Aorta (tissue), 5 donors: ENCODE measurements at regions of chr12 and their contacts with region 1.

Region 1: DNA sequence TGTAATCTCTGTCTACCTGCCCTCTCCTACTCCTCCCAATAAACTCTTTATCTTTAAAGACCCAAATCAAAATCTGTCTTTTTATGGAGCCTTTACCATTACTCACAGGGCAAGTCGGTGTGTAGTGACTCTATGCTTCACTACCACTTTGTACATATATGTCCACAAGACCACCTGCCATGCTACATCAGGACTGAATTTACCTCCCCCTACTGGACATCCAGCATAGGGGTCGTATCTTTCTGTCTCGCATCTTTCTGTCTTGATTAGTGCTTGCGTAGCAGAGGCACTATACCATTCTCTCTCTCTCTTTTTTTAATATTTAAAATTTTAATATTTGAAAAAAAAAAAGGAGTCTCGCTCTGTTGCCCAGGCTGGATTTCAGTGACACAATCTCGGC is 587.5 kb downstream of the SOX5 start:
- DNase-seq: no peak
- ATAC-seq: no peak
- H3K4me3 ChIP-seq: no peak overlapping the region
- H3K27ac ChIP-seq: peak overlapping the region; percentile 36 to 52
- H3K4me1 ChIP-seq: peaks cover 0 to 3% of the 10 kb centered on the region in 2 donors
- H3K27me3 ChIP-seq: no peaks in the 10 kb centered on the region

Region 2: DNA sequence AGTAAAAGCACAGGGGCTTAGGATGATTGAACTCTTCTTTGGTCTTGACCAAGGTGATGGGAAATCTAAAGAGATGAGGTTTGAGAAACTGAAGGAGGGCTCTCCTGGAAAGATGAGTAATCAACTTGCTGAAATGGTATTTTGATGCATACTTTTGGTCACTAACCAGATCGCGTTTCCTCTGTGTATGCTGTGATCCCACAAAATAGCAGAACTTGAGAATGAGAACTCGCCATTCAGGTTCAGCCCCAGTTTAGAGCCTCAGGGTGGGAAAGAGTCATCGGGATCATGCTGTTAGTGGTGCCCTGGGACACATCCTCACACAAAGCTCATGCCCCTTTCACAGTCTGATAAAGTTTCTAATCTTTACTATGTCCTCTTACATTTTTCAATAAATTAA is 248.2 kb before region 1 on chr12:
- intact Hi-C with region 1: no loop called
- DNase-seq: no peak
- ATAC-seq: no peak
- H3K4me3 ChIP-seq: no peak overlapping the region
- H3K27ac ChIP-seq: no peak overlapping the region
- H3K4me1 ChIP-seq: no peaks in the 10 kb centered on the region
- H3K27me3 ChIP-seq: no peaks in the 10 kb centered on the region

Region 3: DNA sequence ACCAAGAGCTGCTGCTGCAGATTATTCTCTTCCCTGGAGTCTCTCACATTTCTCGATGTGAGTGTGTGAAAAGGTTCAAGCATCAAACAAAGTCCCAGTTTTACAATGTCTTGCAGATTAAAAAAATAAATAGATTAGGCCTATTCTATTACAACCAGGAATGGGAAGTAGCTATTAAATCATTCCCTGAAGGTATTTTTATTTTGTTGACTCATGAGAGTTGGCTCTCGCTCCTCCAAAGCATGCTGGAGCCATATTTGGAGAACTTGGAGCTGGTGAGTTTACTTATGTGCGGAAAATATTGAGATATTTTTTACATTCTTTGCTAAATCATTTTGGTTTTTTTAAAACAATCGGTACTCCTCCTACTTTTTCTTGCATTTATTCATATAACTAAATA is 164.7 kb before region 1 on chr12:
- intact Hi-C with region 1: loop called (anchors 5 kb)
- DNase-seq: no peak
- ATAC-seq: peak; percentile 84
- H3K4me3 ChIP-seq: peak overlapping the region in 1 of 2 donors; percentile 10
- H3K27ac ChIP-seq: peak overlapping the region in 1 of 2 donors; percentile 67
- H3K4me1 ChIP-seq: peaks cover 2 to 3% of the 10 kb centered on the region in 2 donors
- H3K27me3 ChIP-seq: no peaks in the 10 kb centered on the region

Region 4: GRCh38 chr12:23540572-23540971 is 178.6 kb after region 1 on chr12:
- intact Hi-C with region 1: loop called in 1 of 2 experiments (anchors 10 kb)
- DNase-seq: no peak
- ATAC-seq: no peak
- H3K4me3 ChIP-seq: no peak overlapping the region
- H3K27ac ChIP-seq: no peak overlapping the region
- H3K4me1 ChIP-seq: no peaks in the 10 kb centered on the region
- H3K27me3 ChIP-seq: no peaks in the 10 kb centered on the region

Region 5: DNA sequence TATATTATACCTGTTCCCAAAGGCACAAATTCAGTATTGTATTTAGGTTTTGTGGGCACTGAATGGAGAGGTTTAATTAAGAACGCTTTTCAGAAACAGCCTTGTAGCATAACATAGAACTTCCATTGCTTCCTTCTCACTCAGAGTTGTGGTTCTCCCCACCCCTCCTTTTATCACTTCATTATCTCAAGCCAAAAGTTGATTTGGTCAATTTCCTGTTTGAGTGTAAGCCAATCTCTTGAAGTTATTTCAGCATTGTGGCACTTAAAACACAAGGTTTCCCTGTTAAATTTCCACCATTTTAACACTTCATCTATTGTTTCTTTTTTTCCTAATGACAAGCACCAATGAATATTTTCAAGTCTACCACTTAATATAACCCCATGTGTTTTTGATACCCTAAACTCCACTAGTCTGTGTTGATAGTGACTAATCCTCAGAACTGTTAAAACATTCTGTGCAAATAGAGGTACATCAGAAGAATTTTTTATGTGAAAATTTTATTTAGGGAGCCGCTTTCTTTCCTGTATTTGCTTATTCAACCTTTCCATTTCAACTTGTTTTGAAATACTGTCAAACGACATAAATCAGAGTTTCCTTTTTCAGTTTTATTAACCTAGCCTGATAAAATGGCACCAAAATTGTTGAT is 1246.8 kb after region 1 on chr12:
- intact Hi-C with region 1: loop called in 1 of 2 experiments (anchors 5 kb)
- DNase-seq: no peak
- ATAC-seq: no peak
- H3K4me3 ChIP-seq: no peak overlapping the region
- H3K27ac ChIP-seq: peak overlapping the region in 1 of 2 donors; percentile 87
- H3K4me1 ChIP-seq: peaks cover 5% of the 10 kb centered on the region in 2 donors
- H3K27me3 ChIP-seq: no peaks in the 10 kb centered on the region